ENCODE measurements at regions of chr11 and their contacts with region 1.

Region 1: GRCh38 chr11:45025716-45026492 is 75.2 kb upstream of the TP53I11 start:
- DNase-seq: peak; percentile 68 to 90
- ATAC-seq: peak; percentile 64 to 93 (median 86)
- H3K4me3 ChIP-seq: no peak overlapping the region
- H3K27ac ChIP-seq: peak overlapping the region; percentile 11 to 86 (median 74)
- H3K4me1 ChIP-seq: peaks cover 10 to 83% (median 50%) of the 10 kb centered on the region in 9 donors
- H3K27me3 ChIP-seq: no peaks in the 10 kb centered on the region
- CTCF ChIP-seq: no peak

Region 2: GRCh38 chr11:45079943-45080719 is 54.2 kb after region 1 on chr11:
- intact Hi-C with region 1: loop called in 1 of 10 experiments (anchors 5 kb)
- DNase-seq: no peak
- ATAC-seq: peak in 7 of 8 donors; percentile 27 to 70 (median 54)
- H3K4me3 ChIP-seq: no peak overlapping the region
- H3K27ac ChIP-seq: peak overlapping the region in 1 of 10 donors; percentile 78
- H3K4me1 ChIP-seq: peaks cover 0 to 54% (median 9%) of the 10 kb centered on the region in 9 donors
- H3K27me3 ChIP-seq: no peaks in the 10 kb centered on the region
- CTCF ChIP-seq: no peak

Measured in heart right ventricle (tissue), 16 donors.